B cell (primary cell): ENCODE measurements at regions of chr17 and their contacts with region 1.

Region 1: DNA sequence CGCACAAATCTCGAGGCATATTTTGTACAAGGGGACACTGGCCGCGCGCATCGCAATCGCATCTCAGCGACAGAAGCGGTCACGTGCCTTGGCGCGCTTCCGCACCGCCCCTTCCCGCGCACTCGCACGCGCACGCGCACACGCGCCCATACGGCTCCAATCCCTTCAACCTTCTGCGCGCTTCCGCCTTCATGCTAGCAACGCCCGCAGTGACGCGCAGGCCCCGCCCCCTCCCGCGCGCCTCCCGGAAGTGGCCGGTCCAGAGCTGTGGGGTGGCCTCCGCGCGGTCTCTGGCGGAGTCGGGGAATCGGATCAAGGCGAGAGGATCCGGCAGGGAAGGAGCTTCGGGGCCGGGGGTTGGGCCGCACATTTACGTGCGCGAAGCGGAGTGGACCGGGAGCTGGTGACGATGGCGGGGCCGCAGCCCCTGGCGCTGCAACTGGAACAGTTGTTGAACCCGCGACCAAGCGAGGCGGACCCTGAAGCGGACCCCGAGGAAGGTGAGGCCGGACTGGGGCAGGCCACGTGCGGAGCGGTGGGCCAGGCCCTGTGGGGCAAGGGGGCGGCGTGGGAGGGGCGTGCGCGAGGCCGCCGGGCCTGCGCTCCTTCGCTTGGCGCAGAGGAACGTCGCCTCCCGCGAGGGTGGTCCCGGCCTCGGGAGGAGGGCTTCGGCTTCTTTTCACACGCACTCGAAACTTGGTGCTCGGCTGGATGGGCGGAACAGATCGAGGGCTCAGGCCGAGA is at the start of gene AATF:
- DNase-seq: peak; percentile 98
- ATAC-seq: peak; percentile 97
- H3K4me3 ChIP-seq: peak within 1 kb of the TSS; percentile 70 to 96 (median 85)
- H3K4me3 Mint-ChIP-seq: peak within 1 kb of the TSS; percentile 96
- H3K27ac ChIP-seq: peak within 1 kb of the TSS; percentile 77 to 86
- H3K27ac Mint-ChIP-seq: peak within 1 kb of the TSS; percentile 90
- H3K4me1 ChIP-seq: peaks cover 25 to 47% of the 10 kb centered on the region in 2 donors
- H3K4me1 Mint-ChIP-seq: peaks cover 50% of the 10 kb centered on the region
- H3K27me3 ChIP-seq: peaks cover 0 to 39% (median 37%) of the 10 kb centered on the region in 4 experiments
- H3K27me3 Mint-ChIP-seq: peaks cover 30% of the 10 kb centered on the region
- CTCF ChIP-seq: no peak
- total RNA-seq, gene AATF: 49.6 and 54.8 TPM in 2 replicates

Region 2: DNA sequence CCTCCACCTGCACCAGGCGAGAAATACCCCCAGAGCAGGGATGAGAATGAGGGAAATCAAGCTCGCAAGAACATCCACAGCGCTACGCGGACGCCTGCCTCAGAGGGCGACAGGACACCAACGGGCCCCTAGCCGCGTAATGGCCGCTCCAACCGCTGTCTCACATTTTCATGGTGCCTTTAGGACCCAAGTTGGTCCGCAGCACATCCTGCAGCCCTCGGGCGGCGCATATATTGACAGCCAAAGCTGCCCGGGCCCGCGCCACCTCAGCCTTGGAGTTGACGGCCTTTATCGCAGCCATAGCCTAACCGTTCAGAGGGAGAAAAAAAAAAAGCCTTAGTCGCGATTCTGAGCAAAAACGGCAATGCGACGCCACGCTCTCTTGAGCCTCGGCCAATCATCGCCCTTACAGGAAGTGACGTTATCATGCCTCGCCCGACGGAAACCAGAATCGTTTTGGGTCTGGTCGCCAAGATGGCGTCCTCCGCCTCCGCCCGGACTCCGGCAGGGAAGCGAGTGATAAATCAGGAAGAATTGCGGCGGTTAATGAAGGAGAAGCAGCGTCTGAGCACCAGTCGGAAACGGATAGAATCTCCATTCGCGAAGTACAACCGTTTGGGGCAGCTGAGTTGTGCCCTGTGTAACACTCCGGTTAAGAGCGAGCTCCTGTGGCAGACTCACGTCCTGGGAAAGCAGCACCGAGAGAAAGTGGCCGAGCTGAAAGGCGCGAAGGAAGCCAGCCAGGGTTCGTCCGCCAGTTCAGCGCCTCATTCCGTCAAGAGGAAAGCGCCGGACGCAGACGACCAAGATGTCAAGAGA is 1987.6 kb before region 1 on chr17 and contains the starts of genes CCT6B and ZNF830:
- CTCF ChIA-PET with region 1: no interaction called
- POLR2A ChIA-PET with region 1: no interaction called
- intact Hi-C with region 1: loop called (anchors 5 kb)
- DNase-seq: peak; percentile 95
- ATAC-seq: peak; percentile 90
- H3K4me3 ChIP-seq: peak within 1 kb of the TSS; percentile 72 to 98 (median 88)
- H3K4me3 Mint-ChIP-seq: peak within 1 kb of the TSS; percentile 99
- H3K27ac ChIP-seq: peak within 1 kb of the TSS; percentile 85 to 92
- H3K27ac Mint-ChIP-seq: peak within 1 kb of the TSS; percentile 99
- H3K4me1 ChIP-seq: peaks cover 13 to 17% of the 10 kb centered on the region in 2 donors
- H3K4me1 Mint-ChIP-seq: peaks cover 25% of the 10 kb centered on the region
- H3K27me3 ChIP-seq: peaks cover 0 to 7% (median 0%) of the 10 kb centered on the region in 4 experiments
- H3K27me3 Mint-ChIP-seq: peaks cover 10% of the 10 kb centered on the region
- CTCF ChIP-seq: no peak
- total RNA-seq, gene CCT6B: 2.6 and 2.8 TPM in 2 replicates
- total RNA-seq, gene ZNF830: 44.6 and 45.4 TPM in 2 replicates

Region 3: DNA sequence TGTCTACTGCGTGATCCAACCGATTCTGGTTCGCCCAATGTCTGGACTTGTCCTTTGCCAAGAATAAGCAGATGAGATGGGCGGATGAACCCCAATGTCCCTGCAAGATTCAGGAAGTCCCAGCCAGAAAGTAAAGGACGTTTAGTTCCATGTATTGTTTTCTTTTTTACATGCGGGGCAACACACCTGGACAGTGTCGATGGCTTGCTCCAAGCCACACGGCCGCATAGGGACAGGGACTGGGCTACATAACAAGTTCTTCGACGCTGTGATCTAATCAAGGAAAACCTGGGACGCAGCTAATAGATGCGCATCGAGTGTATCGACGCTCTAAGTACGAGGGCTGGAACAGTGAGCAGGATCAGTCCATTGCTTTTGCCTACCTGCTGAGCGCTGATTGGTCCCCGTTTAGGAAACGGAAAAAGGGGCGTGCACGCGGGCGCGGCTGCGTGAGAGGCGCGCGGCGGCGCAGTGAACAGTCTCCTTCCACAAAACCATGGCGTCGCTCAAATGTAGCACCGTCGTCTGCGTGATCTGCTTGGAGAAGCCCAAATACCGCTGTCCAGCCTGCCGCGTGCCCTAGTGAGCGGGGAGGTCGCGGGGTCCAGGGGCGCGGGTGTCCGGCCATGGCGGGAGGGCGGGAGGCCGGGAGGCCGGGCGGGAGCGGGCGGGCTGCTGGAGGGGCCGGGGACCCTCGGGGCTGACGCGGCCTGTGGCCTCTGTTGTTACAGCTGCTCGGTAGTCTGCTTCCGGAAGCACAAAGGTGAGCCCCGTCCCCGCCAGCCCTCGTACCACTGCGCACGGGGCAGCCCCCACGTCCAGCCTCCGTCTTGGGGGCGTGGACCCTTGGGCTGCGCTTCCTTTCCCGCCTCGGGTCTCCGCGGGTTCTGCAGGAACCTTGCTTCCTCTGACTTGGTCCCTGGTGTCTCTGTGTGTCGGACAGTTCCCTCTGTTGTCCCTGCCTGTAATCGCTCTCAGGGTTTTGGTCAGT is 462.4 kb before region 1 on chr17 and contains the start of gene ZNHIT3:
- CTCF ChIA-PET with region 1: no interaction called
- POLR2A ChIA-PET with region 1: no interaction called
- intact Hi-C with region 1: loop called (anchors 2 kb)
- DNase-seq: peak; percentile 93
- ATAC-seq: peak; percentile 89
- H3K4me3 ChIP-seq: peak within 1 kb of the TSS; percentile 59 to 95 (median 86)
- H3K4me3 Mint-ChIP-seq: peak within 1 kb of the TSS; percentile 99
- H3K27ac ChIP-seq: peak within 1 kb of the TSS; percentile 56 to 83
- H3K27ac Mint-ChIP-seq: peak within 1 kb of the TSS; percentile 99
- H3K4me1 ChIP-seq: peaks cover 31 to 38% of the 10 kb centered on the region in 2 donors
- H3K4me1 Mint-ChIP-seq: peaks cover 44% of the 10 kb centered on the region
- H3K27me3 ChIP-seq: peaks cover 0 to 16% (median 13%) of the 10 kb centered on the region in 4 experiments
- H3K27me3 Mint-ChIP-seq: peaks cover 10% of the 10 kb centered on the region
- CTCF ChIP-seq: no peak
- total RNA-seq, gene ZNHIT3: 50.5 and 53.3 TPM in 2 replicates

Region 4: DNA sequence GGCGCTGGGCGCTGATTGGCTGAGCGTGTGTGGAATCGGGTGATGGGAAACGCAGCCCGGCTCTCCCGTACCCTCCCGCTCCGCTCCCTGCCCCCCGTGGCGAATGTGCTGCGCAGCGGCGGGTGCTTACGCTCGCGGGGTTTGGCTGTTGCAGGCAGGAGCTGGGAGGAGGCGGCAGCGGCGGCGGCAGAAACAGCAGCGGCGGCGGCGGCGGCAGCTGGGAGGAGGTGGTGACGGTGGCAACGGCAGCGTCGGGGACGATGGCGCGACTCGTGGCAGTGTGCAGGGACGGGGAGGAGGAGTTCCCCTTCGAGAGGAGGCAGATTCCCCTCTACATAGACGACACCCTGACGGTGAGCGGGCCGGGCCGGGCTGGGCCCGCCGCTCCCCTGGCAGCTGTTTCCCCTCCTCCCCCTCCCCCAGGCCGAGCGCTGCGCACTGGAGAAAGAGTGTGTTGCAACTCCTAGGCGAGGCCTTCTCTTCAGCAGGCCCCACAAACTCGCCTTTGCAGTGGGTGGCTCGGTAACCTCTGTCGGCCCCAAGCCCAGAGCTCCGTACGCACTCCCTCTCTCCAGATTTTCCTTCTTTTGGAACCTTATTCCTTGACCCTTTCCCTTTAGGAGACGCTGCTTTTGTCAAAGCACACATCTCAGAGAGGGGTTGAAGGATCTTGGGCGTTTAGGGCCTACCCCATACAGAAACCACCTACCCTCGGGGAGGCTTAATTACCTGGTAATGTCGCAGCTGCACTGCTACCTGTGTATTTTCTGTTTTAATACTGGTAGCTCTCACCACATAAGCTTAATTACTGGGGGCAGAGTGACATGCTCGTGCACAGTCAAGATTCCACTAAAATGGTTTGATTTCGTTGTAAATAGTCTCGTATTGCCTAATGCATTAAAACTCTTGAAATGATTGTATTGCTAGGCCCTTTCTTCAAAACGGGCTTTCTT is 403.1 kb before region 1 on chr17:
- CTCF ChIA-PET with region 1: no interaction called
- POLR2A ChIA-PET with region 1: interaction called, 6 read pairs
- intact Hi-C with region 1: loop called (anchors 5 kb)
- DNase-seq: peak; percentile 97
- ATAC-seq: peak; percentile 71
- H3K4me3 ChIP-seq: peak overlapping the region; percentile 74 to 94 (median 92)
- H3K4me3 Mint-ChIP-seq: peak overlapping the region; percentile 96
- H3K27ac ChIP-seq: peak overlapping the region; percentile 96 to 100
- H3K27ac Mint-ChIP-seq: peak overlapping the region; percentile 98
- H3K4me1 ChIP-seq: peaks cover 43 to 46% of the 10 kb centered on the region in 2 donors
- H3K4me1 Mint-ChIP-seq: peaks cover 48% of the 10 kb centered on the region
- H3K27me3 ChIP-seq: no peaks in the 10 kb centered on the region
- H3K27me3 Mint-ChIP-seq: no peaks in the 10 kb centered on the region
- CTCF ChIP-seq: no peak

Region 5: GRCh38 chr17:36722121-36722902 is 226.6 kb before region 1 on chr17:
- CTCF ChIA-PET with region 1: no interaction called
- POLR2A ChIA-PET with region 1: no interaction called
- intact Hi-C with region 1: loop called (anchors 5 kb)
- DNase-seq: peak; percentile 81
- ATAC-seq: peak; percentile 94
- H3K4me3 ChIP-seq: peak overlapping the region in 4 of 5 experiments; percentile 58 to 80 (median 64)
- H3K4me3 Mint-ChIP-seq: peak overlapping the region; percentile 90
- H3K27ac ChIP-seq: peak overlapping the region; percentile 62 to 77
- H3K27ac Mint-ChIP-seq: peak overlapping the region; percentile 96
- H3K4me1 ChIP-seq: peaks cover 25 to 35% of the 10 kb centered on the region in 2 donors
- H3K4me1 Mint-ChIP-seq: peaks cover 55% of the 10 kb centered on the region
- H3K27me3 ChIP-seq: peaks cover 0 to 5% (median 1%) of the 10 kb centered on the region in 4 experiments
- H3K27me3 Mint-ChIP-seq: peaks cover 9% of the 10 kb centered on the region
- CTCF ChIP-seq: no peak

Region 6: DNA sequence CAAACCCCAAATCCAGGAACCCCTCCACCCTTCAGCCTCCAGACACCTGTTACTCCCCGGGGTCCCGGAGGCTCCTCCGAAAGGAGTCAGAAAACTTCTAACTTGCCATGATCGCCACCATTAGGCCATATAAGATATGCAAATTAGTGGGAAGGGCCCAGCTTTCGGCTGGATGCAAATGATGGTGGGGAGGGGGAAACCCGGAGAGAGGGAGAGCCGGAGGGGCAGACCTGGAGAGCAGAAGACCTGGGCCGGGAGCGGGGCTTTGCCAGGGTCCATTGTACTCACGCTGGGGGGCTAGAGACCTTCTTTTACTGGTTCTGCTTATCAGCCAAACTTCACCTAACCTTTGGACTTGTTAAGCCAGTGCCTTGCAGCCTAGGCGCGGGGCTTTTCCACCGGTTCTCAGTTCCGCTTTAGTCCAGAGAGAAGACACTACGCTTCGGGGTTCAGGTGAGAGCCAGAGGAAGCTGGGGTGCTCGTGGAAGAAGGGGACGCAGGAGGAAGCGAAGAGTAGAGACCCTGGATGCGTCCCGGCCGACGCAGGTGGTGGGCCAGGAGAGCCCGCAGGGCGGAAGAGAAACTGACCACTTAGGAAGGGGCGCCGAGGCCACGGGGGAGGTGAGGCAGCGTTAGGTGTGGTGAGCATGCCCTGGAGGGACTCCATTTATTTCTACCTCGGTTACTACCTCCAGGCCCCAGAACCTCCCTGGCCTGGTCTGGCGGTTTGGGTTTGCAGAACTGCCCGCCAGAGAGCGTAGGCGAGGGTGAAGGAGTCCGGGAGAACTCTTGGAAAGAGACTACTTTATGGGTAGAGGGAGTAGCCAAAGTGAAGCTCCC is 796.3 kb after region 1 on chr17 and contains the start of gene HNF1B:
- CTCF ChIA-PET with region 1: no interaction called
- POLR2A ChIA-PET with region 1: no interaction called
- intact Hi-C with region 1: loop called (anchors 10 kb)
- DNase-seq: peak; percentile 90
- ATAC-seq: peak; percentile 81
- H3K4me3 ChIP-seq: peak within 1 kb of the TSS; percentile 13 to 46 (median 41)
- H3K4me3 Mint-ChIP-seq: peak within 1 kb of the TSS; percentile 84
- H3K27ac ChIP-seq: no peak within 1 kb of the TSS
- H3K27ac Mint-ChIP-seq: peak within 1 kb of the TSS; percentile 73
- H3K4me1 ChIP-seq: peaks cover 51 to 62% of the 10 kb centered on the region in 2 donors
- H3K4me1 Mint-ChIP-seq: peaks cover 42% of the 10 kb centered on the region
- H3K27me3 ChIP-seq: peaks cover 0 to 84% (median 61%) of the 10 kb centered on the region in 4 experiments
- H3K27me3 Mint-ChIP-seq: peaks cover 56% of the 10 kb centered on the region
- CTCF ChIP-seq: no peak
- total RNA-seq, gene HNF1B: 1.5 and 1.6 TPM in 2 replicates